Activated CD4-positive, alpha-beta T cell treated with anti-CD3 and anti-CD28 coated beads for 36 hours (primary cell): ENCODE measurements at regions of chr15 and their contacts with region 1.

Region 1: DNA sequence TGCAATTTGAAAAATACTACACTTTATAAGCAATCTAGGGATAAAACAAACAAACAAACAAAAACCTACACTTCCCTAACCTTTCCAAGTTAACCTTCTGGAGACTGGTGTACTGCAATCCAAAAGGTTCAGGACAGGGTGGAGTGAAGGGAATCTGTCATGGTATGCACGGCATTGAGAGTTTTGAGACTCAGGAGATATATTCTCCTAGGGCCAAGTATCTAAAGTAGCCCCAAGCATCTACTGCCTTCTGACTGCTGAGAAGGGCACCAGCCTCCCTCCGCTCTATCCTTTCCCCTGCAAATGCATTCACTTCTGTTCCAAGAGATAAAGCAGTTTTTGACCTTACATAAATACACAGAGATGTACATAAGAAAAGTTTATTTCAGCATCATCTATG is 125.1 kb downstream of the AQP9 start:
- DNase-seq: no peak
- ATAC-seq: no peak
- H3K4me3 Mint-ChIP-seq: no peak overlapping the region
- H3K27ac Mint-ChIP-seq: no peak overlapping the region
- H3K4me1 Mint-ChIP-seq: peaks cover 8% of the 10 kb centered on the region
- H3K27me3 Mint-ChIP-seq: no peaks in the 10 kb centered on the region

Region 2: GRCh38 chr15:58165661-58166060 is 97.6 kb before region 1 on chr15:
- CTCF ChIA-PET with region 1: no interaction called
- POLR2A ChIA-PET with region 1: no interaction called
- intact Hi-C with region 1: no loop called
- DNase-seq: no peak
- ATAC-seq: no peak
- H3K4me3 Mint-ChIP-seq: no peak overlapping the region
- H3K27ac Mint-ChIP-seq: no peak overlapping the region
- H3K4me1 Mint-ChIP-seq: no peaks in the 10 kb centered on the region
- H3K27me3 Mint-ChIP-seq: peaks cover 20% of the 10 kb centered on the region

Region 3: GRCh38 chr15:58274885-58275284 is 11.6 kb after region 1 on chr15:
- CTCF ChIA-PET with region 1: no interaction called
- POLR2A ChIA-PET with region 1: no interaction called
- intact Hi-C with region 1: loop called in 1 of 2 experiments (anchors 1 kb)
- DNase-seq: no peak
- ATAC-seq: no peak
- H3K4me3 Mint-ChIP-seq: no peak overlapping the region
- H3K27ac Mint-ChIP-seq: no peak overlapping the region
- H3K4me1 Mint-ChIP-seq: peaks cover 4% of the 10 kb centered on the region
- H3K27me3 Mint-ChIP-seq: peaks cover 4% of the 10 kb centered on the region